ENCODE measurements at regions of chr12 and their contacts with region 1.

Region 1: DNA sequence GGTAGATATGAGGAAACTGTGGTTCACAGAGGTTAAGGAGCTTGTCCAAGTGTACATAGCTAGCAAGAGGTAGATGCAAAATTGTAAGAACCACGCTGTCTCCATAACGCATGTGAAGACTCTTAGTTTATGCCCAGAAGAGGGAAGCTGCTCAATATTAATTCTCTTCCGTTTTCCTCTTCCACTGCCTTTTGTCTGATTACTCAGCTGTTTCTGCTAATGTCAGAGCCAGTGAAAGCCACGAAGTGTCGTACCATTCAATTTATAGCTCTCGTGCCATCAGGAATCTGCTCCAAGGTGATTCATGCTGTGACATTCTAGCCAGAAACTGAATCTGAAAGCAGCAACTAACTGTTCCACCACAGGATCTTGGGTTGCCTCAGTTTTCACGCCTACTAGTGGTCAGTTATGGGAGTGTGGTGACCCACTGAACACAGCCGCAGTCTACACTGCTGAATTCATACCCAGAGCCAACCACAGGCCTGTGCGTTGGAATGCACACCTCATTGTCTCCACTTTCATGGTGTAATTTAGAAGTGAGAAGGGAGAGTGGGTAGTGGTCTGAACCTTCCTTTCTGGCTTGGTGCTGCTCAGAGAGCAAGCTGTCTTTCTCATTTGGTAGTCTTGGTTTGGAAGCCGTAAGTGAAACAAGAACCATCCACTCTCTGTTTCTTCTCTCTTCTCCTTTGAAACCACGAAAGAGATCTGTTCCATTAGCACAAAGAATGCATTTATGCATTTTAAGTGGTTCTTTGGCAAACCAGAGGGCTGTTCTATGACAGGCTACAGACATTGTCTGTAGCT is 74.2 kb upstream of the NAP1L1 start:
- DNase-seq: peak; percentile 56
- H3K4me3 ChIP-seq: no peak overlapping the region
- H3K27me3 ChIP-seq: no peaks in the 10 kb centered on the region
- CTCF ChIP-seq: peak; percentile 78

Region 2: GRCh38 chr12:76127588-76127987 is 31.1 kb before region 1 on chr12:
- CTCF ChIA-PET with region 1: no interaction called
- POLR2A ChIA-PET with region 1: no interaction called
- DNase-seq: no peak
- H3K4me3 ChIP-seq: no peak overlapping the region
- H3K27me3 ChIP-seq: no peaks in the 10 kb centered on the region
- CTCF ChIP-seq: no peak

Region 3: DNA sequence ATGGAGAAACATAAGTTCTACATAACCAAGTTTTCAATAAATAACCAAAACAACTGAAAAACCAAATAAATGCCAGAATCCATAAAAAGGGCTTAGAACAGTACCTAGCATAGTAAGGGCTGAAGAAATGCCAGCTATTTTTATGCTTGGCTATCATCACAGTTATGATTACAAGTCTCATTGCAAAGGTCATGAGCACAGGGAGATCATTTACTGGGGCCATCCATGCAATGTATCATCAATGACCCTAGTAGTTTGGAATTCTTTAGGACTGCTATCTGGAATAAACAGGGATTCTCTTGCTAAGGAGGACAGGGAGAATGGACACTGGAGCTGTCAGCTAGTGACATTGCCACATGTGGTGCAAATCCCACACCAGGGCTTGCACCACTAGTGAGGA is 18.2 kb after region 1 on chr12:
- CTCF ChIA-PET with region 1: interaction called, 22 read pairs
- POLR2A ChIA-PET with region 1: no interaction called
- DNase-seq: no peak
- H3K4me3 ChIP-seq: no peak overlapping the region
- H3K27me3 ChIP-seq: no peaks in the 10 kb centered on the region
- CTCF ChIP-seq: no peak

Measured in BJ (cell line).